ENCODE measurements at regions of chr1 and their contacts with region 1.

Region 1: GRCh38 chr1:11099310-11100149 is at the start of gene EXOSC10:
- DNase-seq: peak; percentile 86 to 95 (median 93)
- H3K4me3 ChIP-seq: peak within 1 kb of the TSS; percentile 91 to 99 (median 95)
- H3K27ac ChIP-seq: peak within 1 kb of the TSS in 4 of 5 donors; percentile 73 to 90 (median 80)
- H3K4me1 ChIP-seq: peaks cover 0 to 10% of the 10 kb centered on the region in 2 donors
- H3K27me3 ChIP-seq: no peaks in the 10 kb centered on the region
- CTCF ChIP-seq: no peak
- POLR2A ChIP-seq: peak in 1 of 2 donors; percentile 42
- total RNA-seq, gene EXOSC10: 25.5 to 61.9 (median 34.8) TPM

Region 2: DNA sequence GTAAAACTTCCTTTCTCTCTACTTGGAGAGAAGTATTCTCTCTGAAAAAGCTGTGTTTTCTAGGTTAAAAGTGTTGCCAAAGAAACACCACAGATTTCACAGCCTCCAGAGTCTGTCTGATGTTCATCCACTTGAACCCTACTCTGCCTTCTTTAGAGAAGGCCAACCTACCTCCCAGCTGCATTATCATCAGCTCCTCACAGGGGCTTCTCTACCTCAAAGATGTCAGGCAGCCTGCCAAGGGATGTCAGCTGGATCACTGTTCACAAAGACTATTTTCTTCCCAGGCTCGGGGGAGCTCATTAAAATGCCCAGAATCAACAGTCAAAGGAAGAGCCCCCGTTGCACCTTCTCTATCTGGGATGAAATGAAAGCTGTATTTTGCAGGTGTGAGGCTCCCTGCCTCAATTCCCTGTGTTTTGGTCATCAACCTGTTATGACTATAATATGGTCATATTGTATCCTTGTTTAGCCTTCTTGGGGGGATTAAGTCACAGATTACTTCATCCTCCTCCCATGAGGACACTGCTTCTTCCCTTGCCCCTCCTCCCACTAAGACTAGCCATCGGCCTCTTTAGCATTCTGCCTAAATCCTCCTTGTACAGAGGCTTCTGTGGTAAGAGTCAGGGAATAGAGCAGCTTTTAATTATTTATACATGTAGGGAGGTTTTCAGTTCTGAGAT is 115.3 kb after region 1 on chr1:
- intact Hi-C with region 1: loop called in 1 of 2 experiments (anchors 10 kb)
- DNase-seq: no peak
- H3K4me3 ChIP-seq: no peak overlapping the region
- H3K27ac ChIP-seq: no peak overlapping the region
- H3K4me1 ChIP-seq: no peaks in the 10 kb centered on the region
- H3K27me3 ChIP-seq: no peaks in the 10 kb centered on the region
- CTCF ChIP-seq: no peak
- POLR2A ChIP-seq: no peak

Region 3: GRCh38 chr1:11413986-11414391 is 314.5 kb after region 1 on chr1:
- intact Hi-C with region 1: no loop called
- DNase-seq: no peak
- H3K4me3 ChIP-seq: no peak overlapping the region
- H3K27ac ChIP-seq: no peak overlapping the region
- H3K4me1 ChIP-seq: no peaks in the 10 kb centered on the region
- H3K27me3 ChIP-seq: peaks cover 12% of the 10 kb centered on the region
- CTCF ChIP-seq: no peak
- POLR2A ChIP-seq: no peak